ENCODE measurements at regions of chr11 and their contacts with region 1.

Region 1: DNA sequence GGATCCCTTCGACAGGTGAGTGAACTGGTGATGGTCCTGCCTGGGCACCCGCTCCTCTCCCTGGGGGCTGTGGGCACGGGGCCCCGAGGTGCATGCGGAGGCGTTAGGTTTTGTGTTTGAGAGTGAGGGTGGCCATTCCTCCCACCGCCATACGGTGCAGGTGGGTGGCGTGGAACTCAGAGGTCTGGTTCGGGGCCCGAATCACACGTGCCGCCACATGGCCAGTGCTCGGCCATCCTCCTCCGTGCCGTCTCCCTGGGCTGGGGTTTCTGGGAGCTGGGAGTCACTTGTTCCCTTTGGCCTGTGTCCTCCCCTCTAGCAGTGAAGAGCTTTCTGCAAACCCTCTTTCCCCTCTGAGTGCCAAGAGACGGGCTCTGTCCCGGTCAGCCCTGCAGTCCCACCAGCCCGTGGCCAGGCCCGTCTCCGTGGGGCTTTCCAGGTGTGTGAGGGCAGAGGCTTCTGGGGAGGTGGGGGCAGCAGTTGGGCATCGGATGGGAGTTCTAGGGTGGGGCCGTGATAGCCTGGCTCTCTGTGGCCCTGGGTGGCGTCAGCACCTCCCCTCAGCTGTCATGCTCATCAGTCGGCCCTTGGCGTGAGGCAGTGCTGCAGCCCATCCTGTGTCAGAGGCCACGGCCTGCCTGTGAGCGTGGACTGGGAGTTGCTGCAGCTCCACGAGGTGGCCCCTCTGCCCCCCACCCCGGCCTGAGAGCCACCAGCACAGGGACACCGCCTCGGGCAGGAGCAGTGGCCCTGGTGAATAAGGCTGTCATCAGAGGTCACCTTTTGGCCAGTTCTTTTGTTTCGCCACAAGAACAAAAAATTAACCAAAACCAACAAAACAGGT is 10.2 kb downstream of the IRF7 start:
- DNase-seq: no peak
- ATAC-seq: peak in 2 of 8 donors; percentile 1 to 6
- H3K4me3 ChIP-seq: no peak overlapping the region
- H3K27ac ChIP-seq: peak overlapping the region in 8 of 10 donors; percentile 36 to 66 (median 45)
- H3K4me1 ChIP-seq: peaks cover 0 to 23% (median 13%) of the 10 kb centered on the region in 9 donors
- H3K27me3 ChIP-seq: no peaks in the 10 kb centered on the region
- CTCF ChIP-seq: no peak

Region 2: DNA sequence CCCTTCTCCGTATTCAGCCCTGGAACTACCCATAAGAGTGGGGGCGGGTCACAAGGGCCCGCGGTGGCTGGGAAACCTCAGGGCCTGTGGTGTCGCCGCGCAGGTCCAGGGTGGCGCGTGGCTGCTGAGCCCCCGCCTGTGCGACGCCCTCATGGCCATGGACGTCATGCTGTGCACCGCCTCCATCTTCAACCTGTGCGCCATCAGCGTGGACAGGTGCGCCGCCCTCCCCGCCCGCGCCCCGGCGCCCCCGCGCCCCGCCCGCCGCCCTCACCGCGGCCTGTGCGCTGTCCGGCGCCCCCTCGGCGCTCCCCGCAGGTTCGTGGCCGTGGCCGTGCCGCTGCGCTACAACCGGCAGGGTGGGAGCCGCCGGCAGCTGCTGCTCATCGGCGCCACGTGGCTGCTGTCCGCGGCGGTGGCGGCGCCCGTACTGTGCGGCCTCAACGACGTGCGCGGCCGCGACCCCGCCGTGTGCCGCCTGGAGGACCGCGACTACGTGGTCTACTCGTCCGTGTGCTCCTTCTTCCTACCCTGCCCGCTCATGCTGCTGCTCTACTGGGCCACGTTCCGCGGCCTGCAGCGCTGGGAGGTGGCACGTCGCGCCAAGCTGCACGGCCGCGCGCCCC is 33.9 kb after region 1 on chr11:
- intact Hi-C with region 1: loop called in 1 of 10 experiments (anchors 1 kb)
- DNase-seq: no peak
- ATAC-seq: no peak
- H3K4me3 ChIP-seq: no peak overlapping the region
- H3K27ac ChIP-seq: no peak overlapping the region
- H3K4me1 ChIP-seq: peaks cover 4 to 30% (median 24%) of the 10 kb centered on the region in 9 donors
- H3K27me3 ChIP-seq: peaks cover 19 to 53% (median 40%) of the 10 kb centered on the region in 7 donors
- CTCF ChIP-seq: no peak